ENCODE measurements at regions of chr9 and their contacts with region 1.

Region 1: DNA sequence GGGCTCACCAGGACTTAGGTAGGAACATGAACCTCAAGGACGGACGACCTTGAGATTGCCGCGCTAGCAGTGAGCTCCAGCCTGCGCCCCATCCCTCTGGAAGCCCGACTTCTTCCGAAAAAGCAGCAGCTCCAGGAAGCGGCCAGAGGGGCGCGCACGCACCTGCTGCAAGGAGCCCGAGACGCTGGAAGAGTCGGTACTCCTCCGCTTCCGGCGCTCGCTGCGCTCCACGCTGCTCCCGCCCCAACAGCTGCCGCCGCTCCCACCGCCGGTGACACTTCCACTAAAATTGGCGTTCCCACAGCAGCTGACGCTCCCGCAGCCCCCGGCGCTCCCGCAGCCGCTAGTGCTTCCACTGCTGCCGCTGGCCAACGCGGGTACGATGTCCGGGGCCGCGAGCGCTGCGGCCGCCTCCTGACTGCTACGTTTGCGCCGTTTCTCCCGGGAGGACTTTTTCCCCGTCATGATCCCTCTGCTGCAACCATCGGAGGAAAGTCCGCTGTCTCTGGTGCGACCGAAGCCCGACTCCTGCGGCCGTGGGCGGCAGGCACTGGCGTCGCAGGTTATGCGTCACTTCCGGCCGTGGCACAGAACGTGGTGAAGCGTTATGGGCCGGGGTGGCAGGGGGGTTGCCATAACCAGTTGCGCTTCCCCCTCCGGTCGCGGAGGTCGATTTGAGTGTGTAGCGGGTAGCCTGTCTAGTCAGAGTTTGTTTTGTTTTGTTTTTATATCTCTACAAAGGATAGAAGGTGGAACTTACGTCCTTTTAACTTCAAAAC is at the start of gene CAAP1:
- DNase-seq: peak; percentile 88
- H3K4me3 Mint-ChIP-seq: peak within 1 kb of the TSS; percentile 96
- H3K27ac Mint-ChIP-seq: peak within 1 kb of the TSS; percentile 100
- H3K4me1 Mint-ChIP-seq: peaks cover 35% of the 10 kb centered on the region
- H3K27me3 Mint-ChIP-seq: no peaks in the 10 kb centered on the region
- total RNA-seq, gene CAAP1: 19.1 and 19.8 TPM in 2 replicates

Region 2: GRCh38 chr9:26710008-26710407 is 182.4 kb before region 1 on chr9:
- intact Hi-C with region 1: no loop called
- DNase-seq: no peak
- H3K4me3 Mint-ChIP-seq: no peak overlapping the region
- H3K27ac Mint-ChIP-seq: no peak overlapping the region
- H3K4me1 Mint-ChIP-seq: no peaks in the 10 kb centered on the region
- H3K27me3 Mint-ChIP-seq: no peaks in the 10 kb centered on the region

Region 3: GRCh38 chr9:26946753-26947727 is 54.6 kb after region 1 on chr9 and contains the start of gene PLAA:
- intact Hi-C with region 1: loop called (anchors 1 kb)
- DNase-seq: peak; percentile 82
- H3K4me3 Mint-ChIP-seq: peak within 1 kb of the TSS; percentile 95
- H3K27ac Mint-ChIP-seq: peak within 1 kb of the TSS; percentile 100
- H3K4me1 Mint-ChIP-seq: peaks cover 48% of the 10 kb centered on the region
- H3K27me3 Mint-ChIP-seq: no peaks in the 10 kb centered on the region
- total RNA-seq, gene PLAA: 46.9 and 48.6 TPM in 2 replicates

Region 4: GRCh38 chr9:26955921-26956859 is 63.8 kb after region 1 on chr9 and contains the start of gene IFT74:
- intact Hi-C with region 1: loop called (anchors 1 kb)
- DNase-seq: peak; percentile 94
- H3K4me3 Mint-ChIP-seq: peak within 1 kb of the TSS; percentile 89
- H3K27ac Mint-ChIP-seq: peak within 1 kb of the TSS; percentile 90
- H3K4me1 Mint-ChIP-seq: peaks cover 40% of the 10 kb centered on the region
- H3K27me3 Mint-ChIP-seq: no peaks in the 10 kb centered on the region
- total RNA-seq, gene IFT74: 7.9 and 9.5 TPM in 2 replicates

Region 5: DNA sequence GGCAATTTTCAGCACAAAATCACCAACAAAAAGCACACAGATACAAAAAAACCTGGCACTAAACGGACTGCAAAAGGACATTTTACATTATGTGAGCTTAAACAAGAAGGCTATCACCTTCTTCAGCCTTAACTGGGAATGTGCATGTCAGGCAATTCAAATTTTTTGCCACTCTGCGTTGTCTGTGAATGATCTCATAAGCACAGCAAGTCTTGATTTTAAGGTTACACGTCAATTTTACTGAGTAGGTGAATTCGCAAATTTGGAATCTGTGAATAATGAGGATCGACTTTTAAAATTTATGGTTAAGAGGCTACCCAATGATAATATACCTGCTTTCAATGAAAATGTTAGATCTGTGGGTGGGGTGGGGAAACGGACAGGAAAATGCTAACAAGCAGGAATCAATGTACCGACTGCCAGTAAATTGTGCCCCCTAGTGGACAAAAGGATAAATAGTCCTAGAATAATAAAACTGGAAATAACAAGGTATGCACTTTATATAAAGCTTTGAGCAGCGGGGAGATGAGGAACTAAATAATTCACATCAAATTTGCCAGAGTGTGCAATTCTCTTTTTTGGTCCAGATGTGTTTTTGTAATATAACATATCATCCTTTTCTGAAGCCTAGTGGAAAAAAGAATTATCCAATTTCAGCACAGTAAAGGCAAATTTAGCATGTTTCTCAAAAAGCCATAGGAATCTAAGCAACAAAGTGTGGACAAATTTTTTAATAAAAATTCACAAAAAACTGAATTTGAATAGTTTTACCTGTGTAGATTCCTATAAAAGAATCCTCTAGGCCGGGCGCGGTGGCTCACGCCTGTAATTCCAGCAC is 384.0 kb after region 1 on chr9:
- intact Hi-C with region 1: loop called (anchors 5 kb)
- DNase-seq: no peak
- H3K4me3 Mint-ChIP-seq: no peak overlapping the region
- H3K27ac Mint-ChIP-seq: no peak overlapping the region
- H3K4me1 Mint-ChIP-seq: peaks cover 8% of the 10 kb centered on the region
- H3K27me3 Mint-ChIP-seq: peaks cover 11% of the 10 kb centered on the region

Region 6: GRCh38 chr9:27365707-27366376 is 473.4 kb after region 1 on chr9:
- intact Hi-C with region 1: loop called (anchors 5 kb)
- DNase-seq: peak; percentile 49
- H3K4me3 Mint-ChIP-seq: peak overlapping the region; percentile 9
- H3K27ac Mint-ChIP-seq: peak overlapping the region; percentile 56
- H3K4me1 Mint-ChIP-seq: peaks cover 32% of the 10 kb centered on the region
- H3K27me3 Mint-ChIP-seq: peaks cover 10% of the 10 kb centered on the region